Vagina (tissue), 2 donors: ENCODE measurements at regions of chr3 and their contacts with region 1.

Region 1: GRCh38 chr3:43155464-43156121 is 49.7 kb upstream of the POMGNT2 start:
- DNase-seq: no peak
- H3K4me3 ChIP-seq: no peak overlapping the region
- H3K27ac ChIP-seq: no peak overlapping the region
- H3K4me1 ChIP-seq: peaks cover 12% of the 10 kb centered on the region
- H3K27me3 ChIP-seq: no peaks in the 10 kb centered on the region
- CTCF ChIP-seq: peak in 1 of 3 experiments; percentile 40
- POLR2A ChIP-seq: no peak

Region 2: GRCh38 chr3:42961633-42962032 is 194.0 kb before region 1 on chr3:
- intact Hi-C with region 1: loop called (anchors 5 kb)
- DNase-seq: no peak
- H3K4me3 ChIP-seq: no peak overlapping the region
- H3K27ac ChIP-seq: no peak overlapping the region
- H3K4me1 ChIP-seq: no peaks in the 10 kb centered on the region
- H3K27me3 ChIP-seq: no peaks in the 10 kb centered on the region
- CTCF ChIP-seq: peak; percentile 33 to 67 (median 42)
- POLR2A ChIP-seq: no peak

Region 3: GRCh38 chr3:43043071-43043766 is 112.4 kb before region 1 on chr3:
- intact Hi-C with region 1: no loop called
- DNase-seq: peak; percentile 75 to 85
- H3K4me3 ChIP-seq: no peak overlapping the region
- H3K27ac ChIP-seq: no peak overlapping the region
- H3K4me1 ChIP-seq: no peaks in the 10 kb centered on the region
- H3K27me3 ChIP-seq: no peaks in the 10 kb centered on the region
- CTCF ChIP-seq: no peak
- POLR2A ChIP-seq: no peak